ENCODE measurements at regions of chr14 and their contacts with region 1.

Region 1: GRCh38 chr14:99192028-99192621 is 79.9 kb downstream of the BCL11B start:
- DNase-seq: peak; percentile 53
- ATAC-seq: no peak
- H3K4me3 Mint-ChIP-seq: peak overlapping the region; percentile 81
- H3K27ac Mint-ChIP-seq: peak overlapping the region; percentile 98
- H3K4me1 Mint-ChIP-seq: peaks cover 84% of the 10 kb centered on the region
- H3K27me3 Mint-ChIP-seq: no peaks in the 10 kb centered on the region
- CTCF ChIP-seq: no peak

Region 2: GRCh38 chr14:98182393-98183055 is 1009.6 kb before region 1 on chr14:
- CTCF ChIA-PET with region 1: no interaction called
- POLR2A ChIA-PET with region 1: no interaction called
- intact Hi-C with region 1: loop called (anchors 10 kb)
- DNase-seq: peak; percentile 83
- ATAC-seq: peak; percentile 65
- H3K4me3 Mint-ChIP-seq: peak overlapping the region; percentile 33
- H3K27ac Mint-ChIP-seq: peak overlapping the region; percentile 99
- H3K4me1 Mint-ChIP-seq: peaks cover 93% of the 10 kb centered on the region
- H3K27me3 Mint-ChIP-seq: no peaks in the 10 kb centered on the region
- CTCF ChIP-seq: no peak

Region 3: DNA sequence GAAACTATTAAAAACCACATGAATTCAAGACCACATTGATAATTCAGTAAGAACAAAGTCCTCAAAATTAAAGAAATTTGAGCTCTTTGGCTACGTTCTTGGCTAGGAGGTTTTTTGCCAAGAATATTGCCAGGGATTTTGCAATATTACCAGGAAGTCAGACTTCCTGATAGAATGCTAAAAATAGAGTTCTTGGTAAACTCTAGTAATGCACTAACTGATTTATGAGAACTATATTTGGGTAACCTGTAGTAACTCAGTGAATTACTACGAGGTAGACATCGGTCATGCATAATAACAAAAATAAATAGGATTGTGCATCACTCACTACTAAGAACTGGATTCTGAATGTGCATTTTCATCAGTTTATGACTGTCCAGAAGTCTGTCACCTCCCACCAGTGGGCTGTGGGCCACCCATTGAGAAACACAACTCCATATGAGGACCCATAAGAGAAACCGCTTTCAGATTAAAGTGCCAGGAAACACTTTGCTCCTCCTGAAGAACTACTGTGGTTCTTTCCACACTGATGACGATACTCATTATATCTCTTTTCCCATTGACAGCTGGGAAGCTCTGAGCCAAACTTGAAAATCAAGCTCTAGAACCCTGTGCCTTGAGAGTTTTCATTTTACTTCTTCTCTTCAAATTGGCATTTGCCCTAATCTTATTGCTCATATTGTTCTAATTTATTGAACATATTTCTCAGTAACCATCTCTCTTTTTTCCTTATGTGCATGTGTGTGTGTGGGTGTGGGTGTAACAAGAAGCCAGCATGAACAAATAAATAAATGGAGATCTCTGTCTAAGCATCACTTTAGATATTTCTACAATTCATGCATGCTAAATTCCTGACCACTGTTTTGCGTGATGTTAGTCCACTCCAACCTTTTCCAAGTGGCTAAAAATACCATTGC is 36.7 kb before region 1 on chr14:
- CTCF ChIA-PET with region 1: no interaction called
- POLR2A ChIA-PET with region 1: no interaction called
- intact Hi-C with region 1: no loop called
- DNase-seq: no peak
- ATAC-seq: no peak
- H3K4me3 Mint-ChIP-seq: no peak overlapping the region
- H3K27ac Mint-ChIP-seq: no peak overlapping the region
- H3K4me1 Mint-ChIP-seq: peaks cover 10% of the 10 kb centered on the region
- H3K27me3 Mint-ChIP-seq: no peaks in the 10 kb centered on the region
- CTCF ChIP-seq: no peak

Region 4: DNA sequence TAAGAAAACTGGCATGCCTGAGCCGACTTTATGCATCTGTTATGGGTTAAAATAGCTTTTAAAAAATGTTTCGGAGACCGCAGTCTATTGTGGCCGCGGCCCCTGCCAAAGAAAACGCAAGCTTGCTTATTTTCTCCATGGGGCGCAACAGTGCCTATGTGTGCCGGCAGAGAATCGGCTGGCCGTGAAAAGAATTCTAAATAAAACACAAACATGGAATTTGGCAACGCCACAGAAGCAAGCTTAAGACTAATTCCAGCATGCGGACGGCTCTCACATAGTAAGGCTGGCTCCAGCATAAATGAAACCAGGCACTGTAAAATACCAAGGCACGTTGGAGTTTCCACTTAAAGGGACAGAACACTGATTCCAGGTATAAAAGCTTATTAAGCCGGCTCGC is 23.2 kb after region 1 on chr14:
- CTCF ChIA-PET with region 1: interaction called, 13 read pairs
- POLR2A ChIA-PET with region 1: interaction called, 17 read pairs
- intact Hi-C with region 1: no loop called
- DNase-seq: no peak
- ATAC-seq: no peak
- H3K4me3 Mint-ChIP-seq: peak overlapping the region; percentile 64
- H3K27ac Mint-ChIP-seq: peak overlapping the region; percentile 98
- H3K4me1 Mint-ChIP-seq: peaks cover 93% of the 10 kb centered on the region
- H3K27me3 Mint-ChIP-seq: no peaks in the 10 kb centered on the region
- CTCF ChIP-seq: no peak

Region 5: GRCh38 chr14:99230208-99231151 is 38.4 kb after region 1 on chr14:
- CTCF ChIA-PET with region 1: interaction called, 19 read pairs
- POLR2A ChIA-PET with region 1: interaction called, 17 read pairs
- intact Hi-C with region 1: loop called (anchors 5 kb)
- DNase-seq: peak; percentile 92
- ATAC-seq: peak; percentile 62
- H3K4me3 Mint-ChIP-seq: peak overlapping the region; percentile 79
- H3K27ac Mint-ChIP-seq: peak overlapping the region; percentile 99
- H3K4me1 Mint-ChIP-seq: peaks cover 92% of the 10 kb centered on the region
- H3K27me3 Mint-ChIP-seq: no peaks in the 10 kb centered on the region
- CTCF ChIP-seq: peak; percentile 54

Region 6: DNA sequence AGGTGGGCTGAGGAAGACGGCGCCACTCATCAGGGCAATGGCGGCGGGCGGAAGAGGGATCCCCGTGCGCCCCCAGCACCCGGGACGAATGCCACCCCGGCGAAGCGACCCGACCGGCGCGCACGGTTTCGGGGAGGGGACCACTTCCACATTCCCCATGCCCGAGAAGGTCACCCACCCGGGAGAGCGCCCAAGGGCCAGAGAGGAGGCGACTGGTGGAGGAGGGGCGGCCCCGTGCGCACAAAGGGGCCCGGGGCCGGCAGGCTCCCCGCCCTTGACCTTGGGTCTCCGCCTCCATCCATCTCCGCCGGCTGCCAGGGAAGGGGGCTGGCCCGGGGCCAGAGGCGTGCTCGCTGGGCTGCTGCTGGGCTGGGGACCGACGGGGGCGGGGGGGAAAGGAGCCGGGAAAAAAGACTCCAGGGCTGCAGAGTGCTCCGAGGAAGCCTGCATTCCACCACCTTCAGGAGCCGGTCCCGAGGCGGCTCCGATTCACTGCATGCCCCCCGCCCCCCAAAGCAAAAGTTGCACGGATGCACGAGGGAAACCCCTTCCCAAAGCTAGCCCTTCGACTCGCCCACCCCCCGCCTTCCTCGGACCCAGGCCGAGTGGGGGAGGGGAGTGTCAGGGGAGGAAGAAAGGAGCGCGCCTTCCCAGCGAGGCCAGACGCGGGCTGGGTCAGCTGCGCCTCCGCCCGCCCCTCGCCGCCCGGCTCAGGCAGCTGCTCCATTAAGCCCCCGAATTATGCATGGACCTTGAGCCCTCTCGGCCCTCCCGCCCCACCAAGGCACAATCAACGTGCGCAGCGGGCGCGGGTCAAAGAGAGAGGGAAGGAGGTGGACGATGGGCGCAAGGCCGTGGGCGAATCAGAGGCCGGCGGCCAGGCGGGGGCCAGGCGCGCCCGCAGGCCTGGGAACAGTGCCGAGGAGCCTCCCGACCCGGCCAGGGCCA is 53.7 kb after region 1 on chr14:
- CTCF ChIA-PET with region 1: interaction called, 5 read pairs
- POLR2A ChIA-PET with region 1: interaction called, 13 read pairs
- intact Hi-C with region 1: no loop called
- DNase-seq: no peak
- ATAC-seq: no peak
- H3K4me3 Mint-ChIP-seq: peak overlapping the region; percentile 79
- H3K27ac Mint-ChIP-seq: peak overlapping the region; percentile 99
- H3K4me1 Mint-ChIP-seq: peaks cover 64% of the 10 kb centered on the region
- H3K27me3 Mint-ChIP-seq: no peaks in the 10 kb centered on the region
- CTCF ChIP-seq: no peak

Measured in activated CD8-positive, alpha-beta T cell treated with anti-CD3 and anti-CD28 coated beads for 36 hours (primary cell).